Naive thymus-derived CD8-positive, alpha-beta T cell (primary cell): ENCODE measurements at regions of chr1 and their contacts with region 1.

Region 1: DNA sequence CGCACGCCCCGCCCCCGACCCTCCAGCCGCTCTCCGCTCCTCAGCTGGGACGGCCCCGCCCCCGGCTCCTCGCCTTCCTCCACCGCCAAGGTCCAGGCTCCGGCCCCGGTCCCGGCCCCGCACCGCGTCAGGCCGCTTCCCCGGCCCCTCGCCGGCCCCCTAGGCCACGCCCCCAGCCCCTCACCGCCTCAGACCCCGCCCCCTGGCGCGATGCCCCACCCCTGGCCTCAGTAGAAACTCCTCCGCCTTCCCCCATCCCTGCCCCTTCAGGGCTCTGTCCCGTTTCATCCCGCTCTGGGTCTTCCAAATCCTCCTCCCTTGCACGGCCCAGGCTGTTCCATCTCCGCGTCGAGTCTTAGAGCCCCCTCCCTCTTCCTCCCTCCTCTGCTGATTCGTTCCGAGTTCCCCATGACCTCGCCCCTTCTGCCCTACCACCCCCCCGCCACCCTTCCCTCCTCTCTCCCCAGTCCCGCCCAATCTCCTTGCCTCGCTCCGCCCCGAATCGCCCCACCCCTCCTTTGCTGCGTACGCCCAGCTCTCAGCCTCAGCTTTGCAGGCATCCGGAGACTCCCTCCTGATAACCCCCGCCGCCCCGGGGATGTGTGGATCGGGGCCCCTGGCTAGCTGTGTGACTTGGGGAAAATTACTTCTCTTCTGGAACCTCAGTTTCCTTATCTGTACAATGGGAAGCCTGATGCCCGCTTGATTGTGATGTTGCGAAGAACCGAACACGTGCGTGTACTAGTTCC is 448 bp upstream of the ASAP3 start:
- DNase-seq: peak; percentile 85 to 95 (median 90)
- ATAC-seq: peak; percentile 82 to 88
- H3K4me3 Mint-ChIP-seq: peak overlapping the region; percentile 84 to 95 (median 88)
- H3K27ac Mint-ChIP-seq: peak overlapping the region in 9 of 10 donors; percentile 16 to 89 (median 85)
- H3K4me1 Mint-ChIP-seq: peaks cover 13 to 20% (median 18%) of the 10 kb centered on the region in 4 donors
- H3K27me3 Mint-ChIP-seq: peaks cover 0 to 9% (median 7%) of the 10 kb centered on the region in 5 donors

Region 2: DNA sequence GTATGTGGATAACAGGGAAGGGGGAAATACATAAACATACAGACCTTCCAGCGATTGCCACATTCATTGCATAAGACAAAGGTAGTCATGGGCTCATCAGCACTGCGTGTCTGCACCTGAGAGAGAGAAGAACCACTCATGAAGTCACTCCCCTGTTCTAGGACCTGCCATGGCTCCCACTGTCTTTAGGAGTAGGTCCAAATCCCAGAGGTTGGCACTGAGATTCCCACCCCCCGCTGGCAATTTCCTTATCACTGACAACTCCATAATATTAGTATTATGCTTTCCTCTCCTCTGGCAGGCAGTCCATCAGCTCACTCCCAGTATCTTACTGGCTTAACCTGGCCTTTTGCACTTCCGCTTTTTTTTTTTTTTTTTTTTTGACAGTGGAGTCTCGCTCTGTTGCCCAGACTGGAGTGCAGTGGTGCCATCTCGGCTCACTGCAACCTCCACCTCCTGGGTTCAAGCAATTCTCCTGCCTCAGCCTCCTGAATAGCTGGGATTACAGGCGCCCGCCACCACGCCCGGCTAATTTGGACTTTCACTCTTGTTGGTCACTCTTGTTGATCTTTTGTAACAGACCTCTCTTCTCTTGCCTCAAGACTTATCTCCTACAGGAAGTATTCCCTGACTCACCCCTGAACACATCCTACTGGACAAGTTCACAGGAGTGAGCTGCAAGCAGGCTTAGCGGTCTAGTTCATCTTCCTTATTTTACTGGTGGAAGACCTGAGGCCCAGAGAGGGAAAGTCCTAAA is 99.9 kb before region 1 on chr1:
- POLR2A ChIA-PET with region 1: no interaction called
- DNase-seq: no peak
- ATAC-seq: no peak
- H3K4me3 Mint-ChIP-seq: no peak overlapping the region
- H3K27ac Mint-ChIP-seq: peak overlapping the region in 2 of 10 donors; percentile 12 to 62
- H3K4me1 Mint-ChIP-seq: no peaks in the 10 kb centered on the region
- H3K27me3 Mint-ChIP-seq: no peaks in the 10 kb centered on the region

Region 3: GRCh38 chr1:23422241-23423030 is 62.0 kb before region 1 on chr1:
- POLR2A ChIA-PET with region 1: interaction called, 15 read pairs
- DNase-seq: peak; percentile 35 to 86 (median 52)
- ATAC-seq: peak; percentile 72 to 83
- H3K4me3 Mint-ChIP-seq: peak overlapping the region; percentile 83 to 98 (median 92)
- H3K27ac Mint-ChIP-seq: peak overlapping the region; percentile 60 to 95 (median 90)
- H3K4me1 Mint-ChIP-seq: peaks cover 25 to 42% (median 34%) of the 10 kb centered on the region in 4 donors
- H3K27me3 Mint-ChIP-seq: peaks cover 0 to 12% (median 0%) of the 10 kb centered on the region in 5 donors

Region 4: DNA sequence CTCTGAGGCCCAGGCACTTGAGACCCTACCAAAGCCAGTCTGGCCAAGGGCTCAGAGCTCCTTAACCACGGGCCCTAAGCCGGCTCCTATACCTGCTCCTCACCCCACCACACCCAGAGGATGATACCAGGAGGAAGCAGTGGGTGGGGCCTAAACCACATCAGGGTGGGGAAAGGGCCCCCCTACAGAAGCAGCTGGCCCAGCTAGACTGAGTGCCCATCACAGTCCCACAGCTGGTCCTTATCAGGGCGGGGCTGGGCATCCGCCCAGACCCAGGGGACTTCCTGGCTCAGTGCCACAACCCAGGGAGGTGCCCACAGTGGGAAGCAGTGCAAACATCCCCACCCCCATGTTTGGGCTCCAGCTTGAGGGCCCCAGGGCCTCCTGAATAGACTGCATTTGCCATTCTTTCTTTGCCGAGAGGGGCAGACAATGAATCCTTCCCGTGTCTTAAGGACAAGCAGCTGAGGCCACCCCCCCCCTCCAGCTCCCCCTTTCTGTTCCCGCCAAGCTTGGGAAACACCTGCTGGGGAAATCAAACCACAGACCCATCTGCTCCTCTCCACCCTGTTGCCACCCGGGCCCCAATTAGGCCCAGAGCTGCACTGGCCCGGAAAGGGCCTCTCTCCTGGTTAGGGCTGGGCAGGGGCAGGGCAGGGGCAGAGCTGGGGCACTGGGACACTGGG is 40.4 kb after region 1 on chr1:
- POLR2A ChIA-PET with region 1: interaction called, 14 read pairs
- DNase-seq: peak in 4 of 10 donors; percentile 14 to 36 (median 31)
- ATAC-seq: peak; percentile 51 to 65
- H3K4me3 Mint-ChIP-seq: peak overlapping the region; percentile 24 to 79 (median 68)
- H3K27ac Mint-ChIP-seq: peak overlapping the region in 9 of 10 donors; percentile 27 to 91 (median 79)
- H3K4me1 Mint-ChIP-seq: peaks cover 26 to 74% (median 62%) of the 10 kb centered on the region in 4 donors
- H3K27me3 Mint-ChIP-seq: peaks cover 0 to under 1% (median 0%) of the 10 kb centered on the region in 5 donors